ENCODE measurements at regions of chr20 and their contacts with region 1.

Region 1: GRCh38 chr20:16476032-16476431 is 97.2 kb downstream of the KIF16B start:
- DNase-seq: peak; percentile 28
- ATAC-seq: peak; percentile 81
- H3K4me3 ChIP-seq: no peak overlapping the region
- H3K27ac ChIP-seq: no peak overlapping the region
- H3K4me1 ChIP-seq: no peaks in the 10 kb centered on the region
- H3K27me3 ChIP-seq: no peaks in the 10 kb centered on the region
- CTCF ChIP-seq: peak; percentile 55 to 71 (median 55)
- EP300 ChIP-seq: no peak
- POLR2A ChIP-seq: no peak
- RAD21 ChIP-seq: peak; percentile 82

Region 2: GRCh38 chr20:15265581-15266309 is 1210.3 kb before region 1 on chr20:
- CTCF ChIA-PET with region 1: no interaction called
- POLR2A ChIA-PET with region 1: no interaction called
- RAD21 ChIA-PET with region 1: no interaction called
- SMC1A ChIA-PET with region 1: no interaction called
- in situ Hi-C with region 1: no loop called
- intact Hi-C with region 1: loop called (anchors 5 kb)
- DNase-seq: no peak
- ATAC-seq: no peak
- H3K4me3 ChIP-seq: no peak overlapping the region
- H3K27ac ChIP-seq: no peak overlapping the region
- H3K4me1 ChIP-seq: peaks cover 23% of the 10 kb centered on the region
- H3K27me3 ChIP-seq: no peaks in the 10 kb centered on the region
- CTCF ChIP-seq: peak in 2 of 3 experiments; percentile 7 to 19; a peak in 2 of 6 replicates
- EP300 ChIP-seq: no peak
- POLR2A ChIP-seq: no peak
- RAD21 ChIP-seq: peak; percentile 25

Region 3: GRCh38 chr20:15708984-15709598 is 766.9 kb before region 1 on chr20:
- CTCF ChIA-PET with region 1: interaction called, 39 read pairs
- POLR2A ChIA-PET with region 1: no interaction called
- RAD21 ChIA-PET with region 1: interaction called, 14 read pairs
- SMC1A ChIA-PET with region 1: interaction called, 27 read pairs
- in situ Hi-C with region 1: loop called (anchors 25 kb)
- intact Hi-C with region 1: loop called (anchors 1 kb)
- DNase-seq: no peak
- ATAC-seq: peak; percentile 94
- H3K4me3 ChIP-seq: no peak overlapping the region
- H3K27ac ChIP-seq: no peak overlapping the region
- H3K4me1 ChIP-seq: no peaks in the 10 kb centered on the region
- H3K27me3 ChIP-seq: no peaks in the 10 kb centered on the region
- CTCF ChIP-seq: peak; percentile 61 to 81 (median 75)
- EP300 ChIP-seq: no peak
- POLR2A ChIP-seq: no peak
- RAD21 ChIP-seq: peak; percentile 79

Region 4: DNA sequence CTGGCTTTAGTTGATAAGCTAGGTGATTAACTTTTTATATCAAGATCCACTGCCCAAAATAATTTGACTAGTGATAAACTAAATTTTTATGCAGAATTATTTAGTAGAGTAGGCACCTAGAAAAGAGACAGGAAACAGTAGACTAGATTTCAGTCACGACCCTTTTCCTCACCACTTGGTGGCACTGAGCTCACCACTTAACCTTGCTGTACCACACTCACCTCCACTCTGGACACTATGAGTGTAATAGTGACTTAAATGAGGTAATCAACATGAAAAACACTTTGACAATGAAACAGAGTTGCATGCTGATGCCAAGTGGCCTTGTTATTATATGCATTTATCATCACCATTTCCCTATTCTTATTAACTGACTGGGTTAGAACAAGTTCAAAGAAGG is 633.2 kb before region 1 on chr20:
- CTCF ChIA-PET with region 1: interaction called, 8 read pairs
- POLR2A ChIA-PET with region 1: no interaction called
- RAD21 ChIA-PET with region 1: interaction called, 5 read pairs
- SMC1A ChIA-PET with region 1: interaction called, 6 read pairs
- in situ Hi-C with region 1: no loop called
- intact Hi-C with region 1: loop called (anchors 2 kb)
- DNase-seq: no peak
- ATAC-seq: peak; percentile 84
- H3K4me3 ChIP-seq: no peak overlapping the region
- H3K27ac ChIP-seq: no peak overlapping the region
- H3K4me1 ChIP-seq: no peaks in the 10 kb centered on the region
- H3K27me3 ChIP-seq: no peaks in the 10 kb centered on the region
- CTCF ChIP-seq: peak; percentile 23 to 46 (median 27); a peak in 3 of 6 replicates
- EP300 ChIP-seq: no peak
- POLR2A ChIP-seq: no peak
- RAD21 ChIP-seq: peak; percentile 36

Region 5: GRCh38 chr20:16257021-16257420 is 219.0 kb before region 1 on chr20:
- CTCF ChIA-PET with region 1: no interaction called
- POLR2A ChIA-PET with region 1: no interaction called
- RAD21 ChIA-PET with region 1: no interaction called
- SMC1A ChIA-PET with region 1: no interaction called
- in situ Hi-C with region 1: no loop called
- intact Hi-C with region 1: no loop called
- DNase-seq: no peak
- ATAC-seq: no peak
- H3K4me3 ChIP-seq: no peak overlapping the region
- H3K27ac ChIP-seq: no peak overlapping the region
- H3K4me1 ChIP-seq: no peaks in the 10 kb centered on the region
- H3K27me3 ChIP-seq: no peaks in the 10 kb centered on the region; a peak in 1 of 4 replicates
- CTCF ChIP-seq: no peak
- EP300 ChIP-seq: no peak
- POLR2A ChIP-seq: no peak
- RAD21 ChIP-seq: no peak

Region 6: GRCh38 chr20:16279320-16279719 is 196.7 kb before region 1 on chr20:
- CTCF ChIA-PET with region 1: interaction called, 39 read pairs
- POLR2A ChIA-PET with region 1: no interaction called
- RAD21 ChIA-PET with region 1: interaction called, 14 read pairs
- SMC1A ChIA-PET with region 1: interaction called, 15 read pairs
- in situ Hi-C with region 1: no loop called
- intact Hi-C with region 1: loop called (anchors 1 kb)
- DNase-seq: no peak
- ATAC-seq: peak; percentile 46; the same call in 2 of the 3 replicates
- H3K4me3 ChIP-seq: no peak overlapping the region
- H3K27ac ChIP-seq: no peak overlapping the region
- H3K4me1 ChIP-seq: no peaks in the 10 kb centered on the region
- H3K27me3 ChIP-seq: no peaks in the 10 kb centered on the region
- CTCF ChIP-seq: peak in 2 of 3 experiments; percentile 17 to 41; a peak in 2 of 6 replicates
- EP300 ChIP-seq: no peak
- POLR2A ChIP-seq: no peak
- RAD21 ChIP-seq: peak; percentile 56

Region 7: DNA sequence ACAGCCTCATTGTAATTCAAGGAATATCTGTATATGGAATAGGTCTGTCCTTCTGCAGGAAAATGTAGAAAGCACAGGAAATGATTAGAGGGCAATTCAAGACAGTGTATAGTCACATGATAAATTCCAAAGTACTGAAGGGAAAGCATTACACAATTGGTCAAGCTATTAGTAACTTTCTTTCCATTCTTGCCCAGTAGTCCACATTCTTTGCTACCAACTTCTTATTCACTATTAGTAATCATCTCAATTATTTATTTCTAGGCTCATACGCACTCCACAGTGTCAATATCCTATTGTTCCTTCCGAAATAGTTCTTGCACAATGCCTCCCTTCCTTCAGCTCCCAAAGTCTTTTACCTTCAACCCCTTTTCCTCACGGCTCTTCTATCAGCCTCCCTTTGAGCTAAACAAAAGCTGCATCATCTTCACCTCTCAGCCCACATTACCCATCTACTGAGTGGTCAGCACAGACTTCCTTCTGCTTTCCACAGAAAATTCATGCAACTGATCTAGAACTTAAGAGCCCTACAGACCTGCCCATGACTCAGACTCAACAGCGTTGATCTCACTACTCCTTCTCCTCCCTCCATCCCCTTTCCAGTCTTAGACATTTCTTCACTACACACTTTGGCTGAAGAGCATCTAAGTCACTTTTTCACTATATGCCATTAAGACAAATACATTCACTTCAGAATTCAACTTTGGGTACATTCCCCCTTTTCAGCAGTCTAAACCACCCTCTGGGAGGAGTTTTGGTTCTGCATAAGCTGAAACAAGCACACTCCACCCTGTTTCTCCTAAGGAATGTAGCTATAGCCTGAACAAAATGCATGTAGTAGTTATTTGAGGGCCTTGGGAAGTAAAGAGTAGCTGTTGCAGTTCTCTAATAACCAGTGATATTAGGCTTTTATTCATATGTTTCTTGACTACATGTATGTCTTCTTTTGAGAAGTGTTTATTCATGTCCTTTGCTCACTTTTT is 60.7 kb before region 1 on chr20:
- CTCF ChIA-PET with region 1: no interaction called
- POLR2A ChIA-PET with region 1: no interaction called
- RAD21 ChIA-PET with region 1: no interaction called
- SMC1A ChIA-PET with region 1: no interaction called
- in situ Hi-C with region 1: no loop called
- intact Hi-C with region 1: no loop called
- DNase-seq: no peak
- ATAC-seq: no peak
- H3K4me3 ChIP-seq: no peak overlapping the region
- H3K27ac ChIP-seq: no peak overlapping the region
- H3K4me1 ChIP-seq: no peaks in the 10 kb centered on the region
- H3K27me3 ChIP-seq: no peaks in the 10 kb centered on the region
- CTCF ChIP-seq: no peak
- EP300 ChIP-seq: no peak
- POLR2A ChIP-seq: no peak
- RAD21 ChIP-seq: no peak

Region 8: DNA sequence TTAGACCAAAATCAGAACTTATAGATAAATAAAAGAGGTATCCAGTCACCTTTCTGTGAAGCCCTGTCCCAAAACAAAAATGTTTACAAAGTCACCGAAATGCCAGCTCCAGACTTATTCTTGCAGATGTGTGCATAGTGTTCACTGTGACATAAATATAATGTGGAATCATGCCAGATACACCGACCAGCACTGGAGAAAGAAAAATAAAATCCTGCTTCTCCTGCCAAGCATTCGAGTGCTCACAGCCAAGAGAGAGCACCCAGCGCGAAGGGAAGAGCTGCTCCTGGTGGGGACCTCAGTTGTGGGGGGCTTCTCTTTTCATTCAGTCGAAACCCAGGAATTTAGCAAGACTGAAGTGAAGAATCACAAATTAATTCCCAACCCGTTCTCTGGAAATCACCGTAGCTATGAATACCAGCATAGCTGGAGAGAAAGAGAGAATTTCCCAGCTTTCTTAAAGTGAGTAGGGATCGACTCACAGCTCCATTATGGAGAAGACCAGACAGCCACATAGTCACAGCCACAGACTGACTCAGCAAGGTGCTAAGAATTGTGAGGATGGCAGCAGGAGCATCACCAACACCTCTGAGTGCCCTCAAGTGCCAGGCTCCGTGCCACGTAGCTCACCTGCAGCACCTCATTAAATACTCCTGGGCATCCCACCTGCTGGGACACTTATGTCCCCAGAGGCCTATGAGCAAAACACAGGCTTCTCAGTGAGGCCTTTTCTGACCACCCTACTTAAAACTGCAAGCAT is 1022.0 kb after region 1 on chr20:
- CTCF ChIA-PET with region 1: no interaction called
- POLR2A ChIA-PET with region 1: no interaction called
- RAD21 ChIA-PET with region 1: no interaction called
- SMC1A ChIA-PET with region 1: no interaction called
- in situ Hi-C with region 1: no loop called
- intact Hi-C with region 1: no loop called
- DNase-seq: no peak
- ATAC-seq: no peak
- H3K4me3 ChIP-seq: no peak overlapping the region
- H3K27ac ChIP-seq: no peak overlapping the region
- H3K4me1 ChIP-seq: no peaks in the 10 kb centered on the region
- H3K27me3 ChIP-seq: no peaks in the 10 kb centered on the region; a peak in 2 of 4 replicates
- CTCF ChIP-seq: no peak
- EP300 ChIP-seq: no peak
- POLR2A ChIP-seq: no peak
- RAD21 ChIP-seq: no peak

Measured in GM12878 (cell line).